Right cardiac atrium (tissue), 5 donors: ENCODE measurements at regions of chr3 and their contacts with region 1.

Region 1: DNA sequence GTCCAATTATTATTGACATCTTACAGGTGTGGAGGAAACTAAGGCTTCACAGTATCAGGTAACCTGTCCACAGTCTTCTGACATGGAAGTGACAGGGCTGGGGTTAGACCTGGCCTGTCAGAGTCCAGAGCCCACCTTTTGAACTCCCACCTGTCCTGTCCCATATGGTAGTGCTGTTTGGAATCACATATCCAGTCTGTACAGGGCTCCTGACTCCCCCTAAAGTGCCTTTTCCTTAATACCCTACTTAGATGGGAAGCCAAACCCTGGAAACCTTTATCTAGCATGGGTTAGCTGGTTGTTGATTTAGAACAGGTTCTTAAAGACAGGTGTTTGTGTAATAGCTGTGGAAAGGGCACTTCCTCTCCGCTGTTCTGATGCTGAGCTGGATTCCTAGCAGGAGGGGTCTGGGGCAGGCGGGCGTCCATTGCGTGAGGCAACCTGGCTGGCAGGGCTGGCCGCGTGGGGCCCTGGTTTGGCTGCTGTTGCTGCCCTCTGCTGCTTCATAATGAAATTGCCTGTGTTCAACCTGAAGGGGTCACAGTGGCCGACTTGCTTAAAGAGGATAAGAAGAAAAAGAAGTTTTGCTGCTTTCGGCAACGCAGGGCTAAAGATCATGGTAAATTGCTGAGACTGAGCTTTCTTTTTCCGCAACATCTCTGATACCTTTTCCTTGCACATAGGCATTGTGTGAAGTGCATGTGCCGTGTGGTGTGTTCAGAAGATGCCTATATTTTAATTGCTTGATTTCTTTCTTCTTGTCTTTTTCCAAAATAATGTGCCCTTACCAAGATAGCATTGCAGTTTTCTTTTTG is 136.2 kb downstream of the CHDH start:
- DNase-seq: peak; percentile 77 to 90 (median 89)
- ATAC-seq: peak; percentile 50 to 62
- H3K4me3 ChIP-seq: no peak overlapping the region
- H3K27ac ChIP-seq: peak overlapping the region; percentile 13
- H3K4me1 ChIP-seq: peaks cover 3% of the 10 kb centered on the region
- H3K27me3 ChIP-seq: no peaks in the 10 kb centered on the region

Region 2: GRCh38 chr3:53130179-53131061 is 579.6 kb before region 1 on chr3 and contains the start of gene RFT1:
- intact Hi-C with region 1: no loop called
- DNase-seq: peak; percentile 99 to 100 (median 99)
- ATAC-seq: peak; percentile 96 to 98
- H3K4me3 ChIP-seq: peak within 1 kb of the TSS; percentile 58
- H3K27ac ChIP-seq: peak within 1 kb of the TSS; percentile 92
- H3K4me1 ChIP-seq: peaks cover 4% of the 10 kb centered on the region
- H3K27me3 ChIP-seq: no peaks in the 10 kb centered on the region
- total RNA-seq, gene RFT1: 10.6 to 12.9 (median 12.6) TPM

Region 3: DNA sequence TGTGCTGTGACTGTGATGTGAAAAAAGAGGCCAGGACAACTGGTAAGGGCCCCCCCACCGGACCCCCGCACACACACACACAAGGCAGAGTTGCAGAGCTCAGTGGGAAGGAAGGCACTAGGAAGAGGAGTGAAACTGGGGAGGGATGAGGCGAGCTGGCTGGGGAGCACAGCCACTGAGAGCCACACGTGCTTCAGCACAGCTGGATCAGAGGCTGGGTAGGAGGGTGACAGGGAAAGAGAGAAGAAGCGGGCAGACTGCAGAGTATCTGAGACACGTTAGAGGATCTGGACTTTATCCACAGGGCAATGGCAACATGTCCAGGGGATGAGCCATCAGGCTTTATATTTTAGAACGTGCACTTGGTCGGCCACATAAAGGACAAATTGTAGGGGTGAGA is 416.2 kb before region 1 on chr3:
- intact Hi-C with region 1: loop called in 2 of 4 experiments (anchors 5 to 10 kb)
- DNase-seq: peak in 1 of 3 donors; percentile 22
- ATAC-seq: peak in 1 of 2 donors; percentile 17
- H3K4me3 ChIP-seq: no peak overlapping the region
- H3K27ac ChIP-seq: no peak overlapping the region
- H3K4me1 ChIP-seq: peaks cover 2% of the 10 kb centered on the region
- H3K27me3 ChIP-seq: no peaks in the 10 kb centered on the region

Region 4: DNA sequence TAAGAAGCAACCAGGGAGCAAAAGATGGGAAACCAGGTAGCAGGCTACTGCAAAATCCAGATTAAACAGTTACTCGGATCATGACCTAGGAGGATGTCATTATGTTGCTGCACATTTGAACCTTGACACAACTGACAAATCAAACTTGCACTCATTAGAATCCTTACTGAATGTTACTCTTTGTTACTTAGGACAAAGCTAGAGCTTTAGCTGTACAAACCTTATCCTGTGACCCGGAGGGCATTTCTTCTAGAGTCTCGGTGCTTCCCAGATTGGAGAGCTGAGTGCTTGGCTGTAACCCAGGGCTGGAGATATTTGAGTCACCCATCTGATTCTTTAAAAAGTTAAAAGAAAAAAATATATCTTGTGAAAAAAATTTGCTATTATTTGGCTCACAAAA is 406.1 kb before region 1 on chr3:
- intact Hi-C with region 1: loop called in 3 of 4 experiments (anchors 5 to 10 kb)
- DNase-seq: no peak
- ATAC-seq: peak; percentile 21 to 46
- H3K4me3 ChIP-seq: no peak overlapping the region
- H3K27ac ChIP-seq: peak overlapping the region; percentile 53
- H3K4me1 ChIP-seq: no peaks in the 10 kb centered on the region
- H3K27me3 ChIP-seq: no peaks in the 10 kb centered on the region

Region 5: GRCh38 chr3:53375019-53375418 is 335.0 kb before region 1 on chr3:
- intact Hi-C with region 1: loop called in 2 of 4 experiments (anchors 10 kb)
- DNase-seq: peak; percentile 59 to 84 (median 73)
- ATAC-seq: peak; percentile 83 to 85
- H3K4me3 ChIP-seq: no peak overlapping the region
- H3K27ac ChIP-seq: no peak overlapping the region
- H3K4me1 ChIP-seq: no peaks in the 10 kb centered on the region
- H3K27me3 ChIP-seq: no peaks in the 10 kb centered on the region

Region 6: DNA sequence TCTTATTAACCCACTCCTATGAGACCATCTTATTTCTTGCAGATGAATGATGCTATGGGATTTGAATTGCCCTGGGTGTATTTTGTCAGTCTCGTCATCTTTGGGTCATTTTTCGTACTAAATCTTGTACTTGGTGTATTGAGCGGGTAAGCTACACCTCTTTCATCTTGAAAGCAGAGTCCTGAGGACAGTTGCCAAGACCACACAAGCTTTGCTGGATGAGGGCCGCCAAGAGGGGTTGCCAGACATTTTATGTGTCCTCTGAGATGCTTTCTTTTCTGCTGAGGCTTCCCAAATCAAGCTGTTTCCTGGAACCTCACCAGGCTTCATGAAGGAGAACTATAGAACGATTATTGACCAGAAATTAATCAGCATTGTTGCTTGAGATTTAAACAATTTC is 37.1 kb before region 1 on chr3:
- intact Hi-C with region 1: loop called in 2 of 4 experiments (anchors 2 to 5 kb)
- DNase-seq: no peak
- ATAC-seq: no peak
- H3K4me3 ChIP-seq: no peak overlapping the region
- H3K27ac ChIP-seq: no peak overlapping the region
- H3K4me1 ChIP-seq: no peaks in the 10 kb centered on the region
- H3K27me3 ChIP-seq: no peaks in the 10 kb centered on the region